Activated CD8-positive, alpha-beta memory T cell treated with anti-CD3 and anti-CD28 coated beads, Interleukin-2, amount 10 ng/mL, durations not matched to agents 7 days and 5 days (primary cell): ENCODE measurements at regions of chr14 and their contacts with region 1.

Region 1: GRCh38 chr14:24086193-24086955 is 7.7 kb upstream of the PCK2 start:
- DNase-seq: no peak
- ATAC-seq: no peak
- H3K4me3 Mint-ChIP-seq: no peak overlapping the region
- H3K27ac Mint-ChIP-seq: no peak overlapping the region
- H3K4me1 Mint-ChIP-seq: peaks cover 8% of the 10 kb centered on the region
- H3K27me3 Mint-ChIP-seq: no peaks in the 10 kb centered on the region

Region 2: GRCh38 chr14:24013654-24014514 is 72.5 kb before region 1 on chr14:
- CTCF ChIA-PET with region 1: interaction called, 10 read pairs
- DNase-seq: peak; percentile 65
- ATAC-seq: peak; percentile 86
- H3K4me3 Mint-ChIP-seq: no peak overlapping the region
- H3K27ac Mint-ChIP-seq: no peak overlapping the region
- H3K4me1 Mint-ChIP-seq: peaks cover 23% of the 10 kb centered on the region
- H3K27me3 Mint-ChIP-seq: peaks cover 15% of the 10 kb centered on the region

Region 3: DNA sequence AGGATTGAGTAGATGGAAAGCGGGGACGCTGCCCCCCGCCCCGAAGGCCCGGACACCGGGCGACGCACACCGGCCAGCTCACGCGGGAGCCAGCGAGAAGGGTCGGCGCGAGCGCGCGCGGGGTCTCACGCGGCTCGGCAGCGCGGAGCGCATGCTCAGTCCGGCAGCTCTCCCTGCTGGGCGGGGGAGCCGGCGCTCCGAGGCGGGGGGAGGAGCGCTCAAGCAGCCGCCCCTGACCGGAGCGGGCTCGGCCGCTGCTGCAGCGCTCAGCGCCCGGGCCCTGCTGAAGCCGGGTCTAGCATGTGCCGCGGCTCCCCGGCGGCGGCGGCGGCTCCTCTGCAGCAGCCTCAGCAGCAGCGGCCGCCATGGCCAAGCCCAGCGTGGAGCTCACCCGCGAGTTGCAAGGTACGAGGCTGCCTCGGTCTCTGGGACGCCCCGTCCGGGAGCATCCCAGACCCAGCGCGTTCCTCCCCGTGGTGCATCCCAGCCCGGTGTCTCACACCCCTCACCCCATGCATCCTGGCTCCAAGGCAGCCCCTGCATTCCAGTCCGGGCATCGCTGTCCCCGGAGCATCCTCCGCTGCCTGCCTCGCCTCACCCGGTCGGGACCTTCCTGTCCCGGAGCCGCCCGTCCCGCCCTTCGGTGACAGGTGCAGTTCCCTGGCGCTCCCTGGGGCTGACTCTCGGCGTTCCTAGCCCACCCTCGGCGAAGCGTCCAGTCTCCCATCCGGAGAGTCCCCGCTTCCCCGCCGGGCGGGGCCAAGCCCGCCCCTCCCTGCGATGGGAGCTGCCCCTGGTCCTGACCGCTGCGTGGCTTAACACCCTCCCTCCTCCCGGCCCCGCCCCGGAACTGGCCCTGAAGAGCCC is 34.4 kb before region 1 on chr14 and contains the start of gene CARMIL3:
- CTCF ChIA-PET with region 1: interaction called, 139 read pairs
- DNase-seq: peak; percentile 79
- ATAC-seq: peak; percentile 88
- H3K4me3 Mint-ChIP-seq: peak within 1 kb of the TSS; percentile 74
- H3K27ac Mint-ChIP-seq: peak within 1 kb of the TSS; percentile 32
- H3K4me1 Mint-ChIP-seq: peaks cover 16% of the 10 kb centered on the region
- H3K27me3 Mint-ChIP-seq: peaks cover 32% of the 10 kb centered on the region
- total RNA-seq, gene CARMIL3: 2.9 to 3.3 TPM

Region 4: DNA sequence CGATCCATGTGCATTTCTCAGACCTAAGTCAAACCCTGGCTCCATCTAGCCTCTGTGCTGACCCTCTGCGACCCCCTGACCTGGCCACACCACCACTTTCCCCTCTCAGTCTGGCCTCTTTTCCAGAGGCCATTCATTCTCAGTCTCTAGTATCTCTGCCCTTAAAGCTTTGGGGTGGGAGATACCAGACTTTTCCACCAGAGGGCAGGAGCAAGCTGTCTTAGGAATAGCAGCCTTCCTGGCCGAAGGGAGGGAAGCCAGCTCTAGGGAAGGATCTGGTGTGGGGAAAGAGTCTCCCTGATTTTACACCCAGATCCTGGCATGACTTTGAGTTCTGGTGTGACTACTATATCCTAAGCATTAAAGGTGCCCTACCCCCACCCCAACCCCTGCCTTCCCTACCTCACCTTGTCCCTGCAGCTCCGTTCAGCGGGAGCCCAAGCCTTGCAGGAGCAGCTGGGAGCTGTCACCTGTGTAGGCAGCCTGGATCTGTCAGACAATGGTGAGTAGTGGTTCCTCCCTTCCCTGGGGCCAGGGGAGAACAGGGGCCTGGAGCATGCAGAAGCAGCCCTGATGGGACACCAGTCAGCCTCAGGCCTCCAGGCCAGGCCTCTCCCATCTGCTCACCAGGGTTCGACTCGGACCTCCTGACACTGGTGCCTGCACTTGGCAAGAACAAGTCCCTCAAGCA is 28.0 kb before region 1 on chr14:
- CTCF ChIA-PET with region 1: interaction called, 139 read pairs
- DNase-seq: peak; percentile 69
- ATAC-seq: peak; percentile 74
- H3K4me3 Mint-ChIP-seq: no peak overlapping the region
- H3K27ac Mint-ChIP-seq: no peak overlapping the region
- H3K4me1 Mint-ChIP-seq: peaks cover under 1% of the 10 kb centered on the region
- H3K27me3 Mint-ChIP-seq: peaks cover 11% of the 10 kb centered on the region

Region 5: DNA sequence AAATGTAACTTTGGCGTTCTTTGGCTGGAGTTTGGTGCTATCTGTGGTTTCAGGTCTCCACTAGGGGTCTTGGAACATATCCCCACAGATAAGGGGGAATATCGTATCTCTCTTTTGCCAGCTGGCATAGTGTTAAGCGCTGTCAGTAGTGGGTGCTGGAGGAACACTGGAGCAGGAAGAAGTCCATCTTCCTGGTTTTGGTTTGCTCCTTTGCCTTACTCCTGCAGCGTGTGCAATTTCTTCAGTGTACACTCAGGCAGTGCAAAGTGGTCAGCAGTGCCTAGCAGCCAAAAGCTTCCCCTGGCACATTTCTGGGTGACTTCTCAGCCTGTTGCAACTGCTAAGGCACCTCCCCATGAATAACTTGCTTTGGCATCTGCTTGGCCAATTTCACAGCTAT is 265.1 kb after region 1 on chr14:
- CTCF ChIA-PET with region 1: no interaction called
- DNase-seq: no peak
- ATAC-seq: no peak
- H3K4me3 Mint-ChIP-seq: no peak overlapping the region
- H3K27ac Mint-ChIP-seq: no peak overlapping the region
- H3K4me1 Mint-ChIP-seq: no peaks in the 10 kb centered on the region
- H3K27me3 Mint-ChIP-seq: peaks cover 55% of the 10 kb centered on the region

Region 6: DNA sequence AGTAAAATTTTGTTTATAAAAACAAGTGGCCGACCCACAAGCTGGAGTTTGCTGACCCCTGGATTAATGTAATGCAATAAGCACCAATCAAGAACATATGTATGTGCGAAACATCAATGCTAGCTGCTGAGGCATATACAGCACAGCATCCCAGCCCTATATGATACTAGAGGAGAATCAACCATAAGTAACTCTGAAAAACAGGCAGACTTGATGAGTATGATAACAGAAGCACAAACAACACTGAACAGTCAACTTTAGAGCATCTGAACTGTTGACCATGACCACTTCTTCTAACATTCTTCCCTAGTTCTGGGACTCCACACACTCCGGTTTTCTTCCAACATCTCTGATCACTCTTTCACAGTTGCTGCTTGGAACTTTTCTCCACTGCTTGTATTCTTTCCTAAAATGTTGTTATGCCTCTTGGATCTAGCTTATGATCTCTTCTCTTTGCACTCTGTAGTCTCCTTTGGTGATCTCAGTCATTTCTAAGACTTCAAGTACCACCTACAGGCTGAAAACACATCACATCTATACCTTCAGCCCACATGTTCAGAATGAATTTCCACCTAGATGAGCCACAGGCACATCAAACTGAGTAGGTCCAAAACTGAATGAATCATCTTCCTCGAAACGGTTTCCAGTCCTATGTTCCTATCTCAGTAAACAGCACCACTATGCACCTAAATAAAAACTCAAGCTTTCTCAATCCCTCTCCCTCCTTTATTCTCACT is 906.4 kb after region 1 on chr14:
- CTCF ChIA-PET with region 1: no interaction called
- DNase-seq: no peak
- ATAC-seq: no peak
- H3K4me3 Mint-ChIP-seq: no peak overlapping the region
- H3K27ac Mint-ChIP-seq: no peak overlapping the region
- H3K4me1 Mint-ChIP-seq: no peaks in the 10 kb centered on the region
- H3K27me3 Mint-ChIP-seq: peaks cover 1% of the 10 kb centered on the region